ENCODE measurements at regions of chr9 and their contacts with region 1.

Region 1: GRCh38 chr9:15529566-15530324 is 19.0 kb upstream of the PSIP1 start:
- DNase-seq: no peak
- H3K4me3 ChIP-seq: no peak overlapping the region
- H3K27ac ChIP-seq: no peak overlapping the region
- H3K4me1 ChIP-seq: no peaks in the 10 kb centered on the region
- H3K27me3 ChIP-seq: no peaks in the 10 kb centered on the region
- CTCF ChIP-seq: no peak
- EP300 ChIP-seq: no peak
- POLR2A ChIP-seq: no peak

Region 2: DNA sequence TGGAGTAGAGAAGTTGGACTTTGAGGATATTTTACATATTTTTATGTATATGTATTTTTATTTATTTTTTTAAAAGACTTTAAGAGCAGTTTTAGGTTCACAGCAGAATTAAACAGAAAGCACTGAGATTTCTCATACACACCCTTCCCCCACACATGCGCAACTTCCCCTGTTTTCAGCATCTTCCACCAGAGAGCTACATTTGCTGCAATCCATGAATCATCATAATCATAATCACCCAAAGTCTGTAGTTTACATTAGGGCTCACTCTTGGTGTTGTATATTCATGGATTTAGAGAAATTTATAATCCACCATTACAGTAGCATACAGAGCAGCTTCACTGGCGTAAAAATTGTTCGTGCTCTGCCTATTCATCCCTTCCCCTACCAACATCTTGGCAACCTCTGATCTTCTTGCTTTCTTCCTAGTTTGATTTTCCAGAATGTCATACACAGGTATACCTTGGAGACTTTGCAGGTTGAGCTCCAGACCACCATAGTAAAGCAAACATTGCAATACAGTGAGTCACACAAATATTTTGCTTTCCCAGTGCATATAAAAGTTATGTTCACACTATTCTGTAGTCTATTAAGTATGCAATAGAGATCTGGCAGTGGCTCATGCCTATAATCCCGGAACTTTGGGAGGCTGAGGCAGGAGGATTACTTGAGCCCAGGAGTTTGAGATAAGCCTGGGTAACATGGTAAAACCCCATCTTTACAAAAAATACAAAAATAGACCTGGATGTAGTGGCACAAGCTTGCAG is 13.5 kb after region 1 on chr9:
- in situ Hi-C with region 1: no loop called
- intact Hi-C with region 1: loop called (anchors 2 kb)
- DNase-seq: no peak
- H3K4me3 ChIP-seq: no peak overlapping the region
- H3K27ac ChIP-seq: no peak overlapping the region
- H3K4me1 ChIP-seq: no peaks in the 10 kb centered on the region
- H3K27me3 ChIP-seq: no peaks in the 10 kb centered on the region
- CTCF ChIP-seq: no peak
- EP300 ChIP-seq: no peak
- POLR2A ChIP-seq: no peak

Region 3: DNA sequence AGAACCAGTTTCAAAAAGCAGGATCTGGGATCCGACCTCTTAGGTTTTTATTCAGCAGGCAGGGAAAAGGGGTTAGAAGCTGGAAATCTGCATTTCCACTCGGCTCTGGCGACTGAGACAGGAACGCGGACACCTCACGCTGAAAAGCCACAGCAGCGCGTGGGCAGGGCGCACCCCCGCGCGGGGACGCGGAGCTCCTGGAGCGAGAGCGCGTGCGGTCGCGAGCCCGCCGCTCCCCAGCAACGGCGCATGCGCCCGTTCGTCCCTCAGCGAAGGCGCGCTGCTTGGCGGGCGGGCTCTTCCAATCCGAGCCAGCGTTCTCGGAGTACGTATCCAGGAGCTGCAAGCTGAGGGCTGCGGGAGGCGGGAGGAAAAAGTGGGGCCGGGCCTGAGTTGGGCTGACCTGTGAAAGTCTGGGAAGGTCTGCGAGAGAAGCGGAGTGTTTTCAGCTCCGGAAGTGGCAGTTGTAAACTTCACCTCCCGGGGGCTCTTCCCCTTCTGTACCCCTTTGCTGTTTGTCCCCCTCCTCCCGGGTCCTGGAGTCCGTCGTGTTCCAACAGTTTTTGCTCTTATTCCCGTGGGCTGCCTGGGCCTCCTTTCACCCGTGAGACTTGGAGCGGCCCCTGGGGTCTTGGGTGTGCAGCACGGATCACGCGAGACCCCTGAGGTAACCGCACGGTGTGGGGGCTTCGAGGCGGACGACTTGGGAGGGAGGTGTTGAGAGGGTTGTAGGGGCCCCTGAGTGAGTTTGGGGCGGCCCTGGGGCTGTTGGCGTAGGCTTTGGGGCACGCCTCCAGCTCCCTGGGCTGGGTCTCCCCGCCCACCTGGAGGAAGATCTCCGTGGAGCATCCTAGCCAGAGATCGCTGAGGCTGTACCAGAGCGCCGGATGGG is 23.1 kb after region 1 on chr9 and contains the start of gene CCDC171:
- in situ Hi-C with region 1: no loop called
- intact Hi-C with region 1: loop called (anchors 1 kb)
- DNase-seq: peak; percentile 93
- H3K4me3 ChIP-seq: peak within 1 kb of the TSS; percentile 65 to 80 (median 70)
- H3K27ac ChIP-seq: peak within 1 kb of the TSS; percentile 89 to 93 (median 91)
- H3K4me1 ChIP-seq: peaks cover 0 to 26% (median 12%) of the 10 kb centered on the region in 4 donors
- H3K27me3 ChIP-seq: no peaks in the 10 kb centered on the region
- CTCF ChIP-seq: peak in 1 of 5 experiments; percentile 8
- EP300 ChIP-seq: no peak
- POLR2A ChIP-seq: peak; percentile 79
- total RNA-seq, gene CCDC171: 1.1 to 5.1 (median 3.6) TPM

Measured in transverse colon (tissue), 4 donors.